Heart left ventricle (tissue), 16 donors: ENCODE measurements at regions of chr6 and their contacts with region 1.

Region 1: DNA sequence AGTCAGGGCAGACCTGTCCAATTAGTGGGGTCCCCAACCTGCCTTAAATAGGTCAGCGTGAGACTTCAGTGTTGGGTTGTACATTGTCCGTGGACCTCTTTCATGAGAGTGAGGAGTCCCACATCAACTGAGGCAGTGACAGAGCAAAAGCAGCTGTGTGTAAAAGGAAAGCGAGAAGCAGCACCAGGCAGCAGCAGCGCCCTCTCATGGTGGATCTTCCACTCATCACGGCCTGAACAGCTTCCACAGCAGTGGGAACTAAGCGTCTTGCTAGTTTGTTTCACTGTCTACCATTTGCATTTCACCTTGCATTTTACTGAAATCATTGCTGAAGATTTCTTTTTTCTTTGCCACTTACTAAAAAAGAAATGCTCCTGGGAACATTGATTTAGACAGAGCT is 333.8 kb downstream of the PKHD1 start:
- DNase-seq: peak in 3 of 5 donors; percentile 18 to 52 (median 28)
- ATAC-seq: peak in 3 of 4 donors; percentile 39 to 66 (median 60)
- H3K4me3 ChIP-seq: no peak overlapping the region
- H3K27ac ChIP-seq: no peak overlapping the region
- H3K4me1 ChIP-seq: no peaks in the 10 kb centered on the region
- H3K27me3 ChIP-seq: peaks cover 0 to 4% (median 0%) of the 10 kb centered on the region in 9 donors
- CTCF ChIP-seq: peak; percentile 29 to 59 (median 44)
- POLR2A ChIP-seq: no peak

Region 2: DNA sequence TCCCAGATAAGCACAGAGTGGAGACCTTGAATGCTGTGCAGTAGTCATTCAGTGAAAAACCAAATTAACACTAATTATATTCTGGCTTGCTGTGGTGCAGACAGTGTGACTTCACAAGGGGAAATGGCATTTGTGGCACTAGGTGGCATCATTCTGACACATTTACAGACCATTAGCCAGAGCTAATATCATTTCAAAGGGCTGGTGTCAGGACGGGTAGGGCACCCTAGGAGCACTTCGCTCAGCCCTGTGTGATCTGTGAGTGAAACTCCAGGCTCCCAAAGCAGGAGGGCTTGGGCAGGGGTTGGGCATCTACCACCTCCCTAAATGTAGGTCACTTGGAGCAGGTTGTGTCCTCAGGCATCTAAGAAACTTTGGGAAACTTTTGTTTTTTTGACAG is 222.0 kb before region 1 on chr6:
- intact Hi-C with region 1: loop called in 9 of 10 experiments (anchors 5 to 10 kb)
- DNase-seq: no peak
- ATAC-seq: peak in 3 of 4 donors; percentile 67 to 76 (median 67)
- H3K4me3 ChIP-seq: no peak overlapping the region
- H3K27ac ChIP-seq: no peak overlapping the region
- H3K4me1 ChIP-seq: no peaks in the 10 kb centered on the region
- H3K27me3 ChIP-seq: no peaks in the 10 kb centered on the region
- CTCF ChIP-seq: peak in 7 of 12 donors; percentile 10 to 42 (median 30)
- POLR2A ChIP-seq: no peak

Region 3: DNA sequence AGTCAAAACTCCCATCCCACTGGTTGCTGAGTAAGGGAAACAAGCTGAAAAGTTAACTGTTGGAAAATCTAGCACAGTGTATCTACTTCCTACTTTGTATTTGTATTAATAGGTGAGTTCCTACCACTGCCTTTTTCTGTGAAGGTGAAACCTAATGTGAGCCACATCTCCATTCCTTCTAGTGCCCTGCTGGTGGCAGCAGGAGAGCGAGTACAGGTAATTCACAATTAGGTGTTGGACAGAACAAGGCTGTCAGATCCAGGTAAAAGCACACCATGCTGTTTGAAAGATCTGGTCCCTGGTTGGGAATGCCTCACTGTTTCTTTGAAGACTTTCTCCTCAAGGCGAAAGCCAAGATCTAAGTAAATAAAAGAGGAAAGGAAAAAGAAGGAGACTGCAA is 194.6 kb before region 1 on chr6:
- intact Hi-C with region 1: loop called in 1 of 10 experiments (anchors 5 kb)
- DNase-seq: no peak
- ATAC-seq: no peak
- H3K4me3 ChIP-seq: no peak overlapping the region
- H3K27ac ChIP-seq: no peak overlapping the region
- H3K4me1 ChIP-seq: no peaks in the 10 kb centered on the region
- H3K27me3 ChIP-seq: no peaks in the 10 kb centered on the region
- CTCF ChIP-seq: peak in 2 of 12 donors; percentile 14 to 24
- POLR2A ChIP-seq: no peak